Endothelial cell of umbilical vein (primary cell): ENCODE measurements at regions of chr5 and their contacts with region 1.

Region 1: DNA sequence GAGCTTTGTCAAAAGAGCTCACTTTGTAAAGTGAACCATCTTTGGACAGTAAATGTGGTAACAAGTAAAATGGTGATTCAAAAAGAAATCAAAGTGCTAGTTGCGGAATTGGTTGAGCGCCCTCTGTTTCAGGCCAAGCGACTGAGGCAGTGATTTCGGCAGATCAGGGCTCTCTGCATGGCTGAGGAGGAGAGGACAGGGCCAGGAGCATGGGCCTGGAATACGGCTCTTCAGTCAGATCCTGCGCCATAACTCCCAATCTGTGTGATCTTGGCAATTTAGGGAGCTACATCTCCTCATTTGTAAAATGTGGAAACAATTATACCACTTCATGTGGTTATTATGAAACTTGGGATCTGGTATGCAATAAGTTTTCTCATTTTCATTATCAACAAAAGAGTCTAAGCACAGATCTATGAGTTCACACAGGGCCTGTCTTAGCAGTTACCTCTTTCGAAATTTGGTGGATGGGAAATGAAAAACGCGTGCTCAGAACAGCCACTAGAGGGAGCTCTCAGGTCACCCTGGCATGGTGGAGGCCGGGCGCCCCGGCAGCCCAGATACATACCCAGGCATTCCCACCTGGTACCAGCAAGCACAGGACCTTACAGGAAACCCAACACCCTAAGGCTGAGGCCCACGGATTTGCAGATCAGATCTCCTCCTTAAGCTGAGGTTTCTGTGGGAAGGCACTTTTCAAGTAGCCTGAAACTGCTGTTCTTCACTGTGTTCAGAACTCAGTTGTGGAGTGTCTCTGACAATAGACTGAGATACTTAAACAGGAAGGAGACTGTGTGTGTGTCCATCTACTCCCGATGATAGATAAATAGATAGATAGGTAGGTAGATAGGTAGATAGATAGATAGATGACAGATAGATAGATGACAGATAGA is 303.7 kb downstream of the RAB3C start:
- DNase-seq: peak; percentile 44
- H3K4me3 ChIP-seq: no peak overlapping the region
- H3K27ac ChIP-seq: no peak overlapping the region
- H3K4me1 ChIP-seq: no peaks in the 10 kb centered on the region
- H3K27me3 ChIP-seq: peaks cover 7 to 12% of the 10 kb centered on the region in 2 experiments
- CTCF ChIP-seq: peak; percentile 84 to 90
- POLR2A ChIP-seq: no peak

Region 2: DNA sequence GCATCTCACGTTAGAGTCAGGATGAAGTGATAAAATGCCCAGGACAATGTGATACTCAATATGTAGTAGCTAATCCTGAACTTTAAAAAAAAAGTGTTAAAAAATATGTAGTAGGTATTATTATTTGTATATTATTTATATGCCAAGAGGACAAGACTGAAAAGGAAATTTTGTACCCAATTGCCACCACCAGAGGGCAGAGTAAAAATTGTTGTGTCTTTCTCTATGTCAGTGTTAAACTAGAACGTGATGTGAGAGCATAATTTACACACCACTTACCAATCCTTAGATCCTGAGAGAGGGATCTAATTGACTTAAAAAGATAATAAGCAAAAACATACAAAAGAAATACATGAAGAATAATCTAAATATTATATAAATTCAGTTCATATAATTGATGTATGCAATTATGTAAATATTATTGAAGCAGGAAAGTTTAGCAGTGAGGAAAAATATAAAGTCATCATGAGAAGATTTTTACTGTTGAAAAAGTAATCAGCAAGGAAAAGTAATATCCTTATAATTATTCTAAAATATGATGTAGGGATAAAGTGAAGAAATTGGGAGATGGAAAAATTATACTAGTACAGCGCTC is 14.8 kb before region 1 on chr5:
- CTCF ChIA-PET with region 1: interaction called, 51 read pairs
- POLR2A ChIA-PET with region 1: no interaction called
- dilution Hi-C with region 1: no loop called
- intact Hi-C with region 1: no loop called
- DNase-seq: peak; percentile 56
- H3K4me3 ChIP-seq: no peak overlapping the region
- H3K27ac ChIP-seq: no peak overlapping the region
- H3K4me1 ChIP-seq: no peaks in the 10 kb centered on the region
- H3K27me3 ChIP-seq: peaks cover 20 to 45% of the 10 kb centered on the region in 2 experiments
- CTCF ChIP-seq: peak; percentile 41 to 54
- POLR2A ChIP-seq: no peak

Region 3: DNA sequence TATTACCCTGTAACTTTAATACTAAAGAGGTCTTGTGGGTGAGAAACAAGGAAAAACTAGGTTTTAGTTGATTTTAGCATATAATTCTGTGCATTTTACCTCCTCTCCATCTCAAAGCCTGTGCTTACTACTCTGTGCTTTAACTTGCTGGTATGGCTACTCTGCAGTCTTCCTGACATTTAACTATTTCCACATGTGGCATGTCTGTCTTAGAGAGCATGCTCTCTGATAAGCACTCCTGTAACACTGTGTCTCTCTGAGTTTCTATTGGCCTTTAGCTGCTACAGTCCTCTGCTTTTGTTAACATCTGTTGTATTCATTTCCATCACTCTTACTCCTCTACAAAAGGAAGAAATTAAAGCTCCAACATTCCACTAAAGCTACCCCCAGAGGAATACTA is 114.6 kb after region 1 on chr5:
- CTCF ChIA-PET with region 1: interaction called, 59 read pairs
- POLR2A ChIA-PET with region 1: no interaction called
- dilution Hi-C with region 1: no loop called
- intact Hi-C with region 1: no loop called
- DNase-seq: no peak
- H3K4me3 ChIP-seq: no peak overlapping the region
- H3K27ac ChIP-seq: no peak overlapping the region
- H3K4me1 ChIP-seq: no peaks in the 10 kb centered on the region
- H3K27me3 ChIP-seq: peaks cover 0 to 1% of the 10 kb centered on the region in 2 experiments
- CTCF ChIP-seq: no peak
- POLR2A ChIP-seq: no peak

Region 4: GRCh38 chr5:59039296-59040023 is 152.9 kb after region 1 on chr5:
- CTCF ChIA-PET with region 1: interaction called, 17 read pairs
- POLR2A ChIA-PET with region 1: no interaction called
- dilution Hi-C with region 1: no loop called
- intact Hi-C with region 1: no loop called
- DNase-seq: peak; percentile 77
- H3K4me3 ChIP-seq: peak overlapping the region; percentile 57 to 81 (median 60)
- H3K27ac ChIP-seq: peak overlapping the region; percentile 14
- H3K4me1 ChIP-seq: peaks cover 40% of the 10 kb centered on the region
- H3K27me3 ChIP-seq: no peaks in the 10 kb centered on the region
- CTCF ChIP-seq: no peak
- POLR2A ChIP-seq: no peak

Region 5: DNA sequence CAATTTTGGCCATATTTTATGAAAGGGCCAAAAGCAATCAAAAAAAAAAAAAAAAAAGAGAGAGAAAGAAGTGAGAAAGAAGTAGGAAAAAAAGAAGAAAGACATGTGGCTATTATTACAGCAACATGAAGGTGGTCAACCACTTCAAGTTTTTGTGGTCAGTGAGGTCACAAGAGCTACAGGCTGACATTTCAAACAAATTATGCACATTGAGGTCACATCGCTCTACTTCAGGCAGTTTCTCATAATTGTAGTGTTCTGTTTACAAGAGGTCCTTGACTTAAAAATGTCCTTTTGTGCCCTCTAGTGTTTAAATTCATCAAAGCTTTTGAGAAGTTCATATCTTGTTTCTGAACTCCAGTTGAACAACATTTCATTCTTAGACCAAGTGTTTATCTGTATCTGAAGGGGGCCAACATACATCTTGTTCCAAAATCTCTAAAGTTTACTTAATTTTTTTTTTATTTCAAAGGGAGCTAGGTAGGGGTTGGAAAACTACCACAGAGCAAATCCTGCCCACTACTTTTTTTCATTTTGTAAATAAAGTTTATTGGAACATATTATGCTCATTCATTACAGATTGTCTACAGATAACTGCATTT is 493.9 kb after region 1 on chr5:
- CTCF ChIA-PET with region 1: interaction called, 13 read pairs
- POLR2A ChIA-PET with region 1: no interaction called
- dilution Hi-C with region 1: no loop called
- intact Hi-C with region 1: loop called (anchors 5 kb)
- DNase-seq: peak; percentile 71
- H3K4me3 ChIP-seq: no peak overlapping the region
- H3K27ac ChIP-seq: no peak overlapping the region
- H3K4me1 ChIP-seq: no peaks in the 10 kb centered on the region
- H3K27me3 ChIP-seq: no peaks in the 10 kb centered on the region
- CTCF ChIP-seq: peak; percentile 20 to 26
- POLR2A ChIP-seq: no peak